Activated CD4-positive, alpha-beta T cell treated with anti-CD3 and anti-CD28 coated beads for 36 hours (primary cell): ENCODE measurements at regions of chr22 and their contacts with region 1.

Region 1: GRCh38 chr22:31080848-31081649 is at the start of gene SMTN:
- DNase-seq: peak; percentile 92
- ATAC-seq: peak; percentile 67
- H3K4me3 Mint-ChIP-seq: peak within 1 kb of the TSS; percentile 82
- H3K27ac Mint-ChIP-seq: peak within 1 kb of the TSS; percentile 63
- H3K4me1 Mint-ChIP-seq: peaks cover 30% of the 10 kb centered on the region
- H3K27me3 Mint-ChIP-seq: no peaks in the 10 kb centered on the region
- total RNA-seq, gene SMTN: 40.1 to 45.8 TPM

Region 2: GRCh38 chr22:29883045-29883774 is 1197.8 kb before region 1 on chr22 and contains the start of gene MTMR3:
- CTCF ChIA-PET with region 1: no interaction called
- POLR2A ChIA-PET with region 1: no interaction called
- intact Hi-C with region 1: loop called in 1 of 2 experiments (anchors 10 kb)
- DNase-seq: peak; percentile 95
- ATAC-seq: peak; percentile 83
- H3K4me3 Mint-ChIP-seq: peak within 1 kb of the TSS; percentile 89
- H3K27ac Mint-ChIP-seq: peak within 1 kb of the TSS; percentile 84
- H3K4me1 Mint-ChIP-seq: peaks cover 6% of the 10 kb centered on the region
- H3K27me3 Mint-ChIP-seq: no peaks in the 10 kb centered on the region
- total RNA-seq, gene MTMR3: 19.2 to 22.8 TPM

Region 3: GRCh38 chr22:30763815-30764686 is 317.0 kb before region 1 on chr22:
- CTCF ChIA-PET with region 1: interaction called, 6 read pairs
- POLR2A ChIA-PET with region 1: no interaction called
- intact Hi-C with region 1: loop called (anchors 1 to 5 kb)
- DNase-seq: peak; percentile 77
- ATAC-seq: peak; percentile 96
- H3K4me3 Mint-ChIP-seq: no peak overlapping the region
- H3K27ac Mint-ChIP-seq: no peak overlapping the region
- H3K4me1 Mint-ChIP-seq: no peaks in the 10 kb centered on the region
- H3K27me3 Mint-ChIP-seq: no peaks in the 10 kb centered on the region

Region 4: DNA sequence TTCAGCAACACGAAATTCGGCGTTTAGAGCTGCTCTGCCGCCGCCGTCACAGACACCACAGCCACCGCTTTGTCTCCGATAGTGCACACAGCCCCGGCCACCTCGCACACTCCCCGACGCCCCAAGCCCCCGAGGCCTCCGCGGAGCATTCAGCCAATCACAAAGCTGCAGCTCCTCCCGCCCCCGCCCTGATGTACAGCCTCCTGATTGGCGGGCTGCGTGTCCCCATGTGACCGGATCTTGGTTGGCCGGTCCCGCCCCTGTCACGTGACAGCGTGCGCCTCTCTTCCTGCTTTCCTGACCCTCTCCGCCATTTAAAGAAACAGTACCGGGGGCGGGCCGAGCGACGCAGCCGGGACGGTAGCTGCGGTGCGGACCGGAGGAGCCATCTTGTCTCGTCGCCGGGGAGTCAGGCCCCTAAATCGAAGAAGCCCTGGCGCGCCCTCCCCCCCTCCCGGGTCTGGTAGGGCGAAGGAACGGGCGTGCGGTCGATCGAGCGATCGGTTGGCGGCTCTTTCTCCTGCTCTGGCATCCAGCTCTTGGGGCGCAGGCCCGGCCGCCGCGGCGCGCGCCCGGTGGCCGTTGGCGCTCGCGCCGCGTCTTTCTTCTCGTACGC is 112.0 kb before region 1 on chr22 and contains the start of gene TUG1:
- CTCF ChIA-PET with region 1: interaction called, 7 read pairs
- POLR2A ChIA-PET with region 1: interaction called, 10 read pairs
- intact Hi-C with region 1: loop called (anchors 1 kb)
- DNase-seq: peak; percentile 99
- ATAC-seq: peak; percentile 93
- H3K4me3 Mint-ChIP-seq: peak within 1 kb of the TSS; percentile 90
- H3K27ac Mint-ChIP-seq: peak within 1 kb of the TSS; percentile 95
- H3K4me1 Mint-ChIP-seq: peaks cover 51% of the 10 kb centered on the region
- H3K27me3 Mint-ChIP-seq: no peaks in the 10 kb centered on the region
- total RNA-seq, gene TUG1: 46.8 to 56.4 TPM

Region 5: DNA sequence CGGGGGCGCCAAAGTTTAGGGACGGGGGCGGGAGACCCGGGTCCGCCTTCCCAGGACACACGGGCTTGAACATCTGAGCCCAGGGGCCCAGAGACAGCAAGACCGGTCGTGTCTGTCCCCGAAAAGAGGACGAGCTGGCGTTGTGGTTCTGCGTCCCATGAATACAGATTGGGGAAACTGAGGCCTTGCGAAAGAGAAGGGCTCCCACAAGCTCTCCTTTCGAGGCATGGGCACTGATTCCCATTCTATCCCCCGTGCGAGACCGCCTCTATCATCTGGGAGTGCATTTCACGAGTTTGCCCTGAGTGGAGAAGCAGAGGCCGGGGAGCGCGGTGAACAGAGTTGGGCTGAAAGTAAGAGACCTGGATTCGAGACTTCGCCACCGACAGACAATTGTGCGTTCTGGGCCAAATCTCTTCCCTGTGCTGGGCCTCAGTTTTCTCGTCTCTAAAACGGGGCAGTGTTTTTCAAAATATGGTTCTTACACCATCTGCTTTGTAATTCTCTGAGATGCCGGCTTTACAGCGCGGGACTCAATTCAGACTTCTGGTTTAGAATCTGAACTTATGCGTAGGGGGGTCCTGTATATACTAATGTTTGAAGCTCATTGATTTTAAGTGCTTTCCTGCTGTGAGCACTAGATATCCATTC is 79.4 kb after region 1 on chr22:
- CTCF ChIA-PET with region 1: interaction called, 5 read pairs
- POLR2A ChIA-PET with region 1: interaction called, 3 read pairs
- intact Hi-C with region 1: loop called in 1 of 2 experiments (anchors 1 kb)
- DNase-seq: peak; percentile 47
- ATAC-seq: peak; percentile 45
- H3K4me3 Mint-ChIP-seq: peak overlapping the region; percentile 85
- H3K27ac Mint-ChIP-seq: peak overlapping the region; percentile 95
- H3K4me1 Mint-ChIP-seq: peaks cover 29% of the 10 kb centered on the region
- H3K27me3 Mint-ChIP-seq: no peaks in the 10 kb centered on the region

Region 6: DNA sequence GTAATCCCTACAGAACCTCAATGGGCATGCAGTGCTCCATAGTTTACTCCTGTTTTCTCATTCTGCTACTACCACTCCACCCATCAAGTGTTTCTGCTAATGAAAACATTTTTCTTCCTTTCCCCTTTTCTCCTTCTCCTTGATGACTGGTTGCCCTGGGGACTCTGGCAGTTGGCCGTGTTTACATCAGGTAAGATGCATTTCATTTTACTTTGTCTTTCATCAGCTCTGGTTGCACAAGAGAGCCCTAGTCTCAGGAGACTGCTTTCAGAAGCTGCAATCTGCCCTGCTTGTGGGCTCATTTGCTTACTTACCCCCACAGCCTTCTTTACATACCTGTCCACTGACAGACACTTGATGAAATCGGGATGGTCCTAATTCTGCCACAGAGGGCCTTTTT is 111.5 kb after region 1 on chr22:
- CTCF ChIA-PET with region 1: no interaction called
- POLR2A ChIA-PET with region 1: no interaction called
- intact Hi-C with region 1: no loop called
- DNase-seq: no peak
- ATAC-seq: no peak
- H3K4me3 Mint-ChIP-seq: no peak overlapping the region
- H3K27ac Mint-ChIP-seq: no peak overlapping the region
- H3K4me1 Mint-ChIP-seq: peaks cover 3% of the 10 kb centered on the region
- H3K27me3 Mint-ChIP-seq: no peaks in the 10 kb centered on the region

Region 7: DNA sequence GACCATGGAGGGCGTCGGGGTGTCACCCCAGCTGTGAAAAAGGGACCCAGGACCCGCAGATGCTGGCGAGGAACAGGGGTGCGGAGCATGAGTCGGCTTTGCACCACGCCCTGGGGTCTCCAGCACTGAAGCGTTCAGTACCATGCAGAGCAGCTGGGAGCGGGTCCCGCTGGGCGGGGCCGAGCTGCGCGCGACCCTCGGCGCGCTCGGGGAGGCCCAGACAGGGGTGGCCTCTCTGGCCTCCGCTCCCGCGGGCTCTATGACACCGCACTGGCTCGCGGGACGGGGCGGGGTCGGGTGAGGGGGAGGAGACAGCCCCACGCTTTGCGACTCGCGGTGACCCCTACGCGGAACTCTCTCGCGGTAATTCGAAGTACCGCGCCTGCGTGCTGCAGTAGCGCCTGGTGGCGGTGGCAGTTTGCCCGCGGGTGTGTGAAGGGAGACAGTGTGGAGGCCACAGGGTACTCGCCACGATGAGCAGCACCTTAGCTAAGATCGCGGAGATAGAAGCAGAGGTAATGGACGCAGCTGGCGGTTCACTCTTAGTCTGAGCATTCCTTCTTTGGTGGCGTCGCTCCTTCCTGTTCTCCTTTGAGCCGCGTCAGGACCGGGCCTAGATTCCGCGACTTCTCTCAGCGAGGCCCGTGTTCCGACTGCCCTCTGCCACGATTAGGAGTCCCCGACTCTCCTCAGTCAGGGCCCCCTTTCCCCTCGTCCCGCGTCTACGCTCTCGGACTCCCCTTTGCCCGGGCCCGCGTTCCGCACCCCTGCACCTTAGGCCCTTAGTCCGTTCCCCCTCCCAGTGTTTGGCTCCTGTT is 318.4 kb after region 1 on chr22 and contains the start of gene DRG1:
- CTCF ChIA-PET with region 1: no interaction called
- POLR2A ChIA-PET with region 1: no interaction called
- intact Hi-C with region 1: loop called in 1 of 2 experiments (anchors 1 kb)
- DNase-seq: peak; percentile 99
- ATAC-seq: peak; percentile 98
- H3K4me3 Mint-ChIP-seq: peak within 1 kb of the TSS; percentile 99
- H3K27ac Mint-ChIP-seq: peak within 1 kb of the TSS; percentile 91
- H3K4me1 Mint-ChIP-seq: peaks cover 18% of the 10 kb centered on the region
- H3K27me3 Mint-ChIP-seq: peaks cover under 1% of the 10 kb centered on the region
- total RNA-seq, gene DRG1: 104 to 106 TPM